ENCODE measurements at regions of chr6 and their contacts with region 1.

Region 1: DNA sequence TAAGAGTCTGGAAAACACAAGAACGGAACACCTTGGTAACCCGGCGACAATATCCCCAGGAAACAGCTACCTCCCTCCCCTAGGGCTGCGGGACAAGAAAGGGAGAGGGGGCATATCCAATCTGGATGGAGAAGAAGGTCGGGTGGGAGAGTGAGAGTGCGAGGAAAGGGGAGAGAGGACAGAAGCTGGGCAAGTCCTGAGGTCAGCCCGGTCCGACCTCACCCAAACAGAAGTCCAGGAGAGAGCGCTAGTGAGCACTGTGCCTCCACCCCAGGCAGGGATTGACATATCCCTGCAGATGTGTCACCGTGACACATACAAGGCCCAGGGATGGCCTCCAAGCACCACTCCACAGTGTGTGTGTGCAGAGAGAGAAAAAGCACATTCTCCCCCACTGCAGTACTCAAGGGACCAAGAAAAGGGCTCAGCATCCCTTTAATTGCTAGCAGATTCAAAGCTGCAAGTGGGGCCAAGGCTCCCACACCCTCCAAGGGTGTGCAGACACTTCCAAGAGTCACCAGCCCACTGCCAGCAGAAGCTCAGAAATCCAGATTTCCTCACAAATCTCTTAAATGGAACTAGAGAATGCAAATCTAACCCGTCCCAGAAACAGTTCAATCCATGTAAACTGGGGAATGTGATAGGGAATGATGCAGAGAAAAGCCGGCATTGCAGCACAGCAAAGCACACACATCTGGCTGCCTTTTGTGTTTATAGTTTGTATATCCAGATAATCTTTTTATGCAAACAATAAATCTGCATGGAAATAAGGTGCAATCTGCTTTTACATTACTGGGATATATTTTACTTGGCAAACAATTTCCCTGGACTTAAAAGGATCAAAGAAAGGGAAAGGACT is 3.1 kb downstream of the PXDC1 start:
- H3K4me3 ChIP-seq: no peak overlapping the region
- H3K27ac ChIP-seq: no peak overlapping the region
- H3K4me1 ChIP-seq: peaks cover 3% of the 10 kb centered on the region; the same call in 1 of the 2 replicates
- CTCF ChIP-seq: peak; percentile 76

Region 2: DNA sequence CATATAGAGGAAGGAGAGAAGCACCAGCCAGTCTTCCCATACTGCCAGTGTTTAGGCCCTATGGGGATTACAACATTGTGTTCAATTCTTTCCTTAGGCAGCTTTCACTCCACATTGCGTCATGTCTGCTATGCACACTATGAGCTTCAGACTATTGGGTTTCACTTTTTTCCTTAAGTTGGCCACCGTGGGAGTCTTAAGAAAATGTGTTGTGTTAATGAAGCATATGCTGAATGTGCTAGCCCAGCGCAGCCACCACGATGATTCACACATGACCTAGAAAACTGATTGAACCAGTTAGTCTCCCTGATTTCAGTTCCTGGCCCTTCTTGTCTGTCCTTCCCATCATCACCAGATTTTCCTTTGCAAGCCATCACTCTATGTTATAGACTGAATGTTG is 542.5 kb before region 1 on chr6:
- CTCF ChIA-PET with region 1: no interaction called
- POLR2A ChIA-PET with region 1: no interaction called
- H3K4me3 ChIP-seq: no peak overlapping the region
- H3K27ac ChIP-seq: no peak overlapping the region
- H3K4me1 ChIP-seq: 0 out of 2 replicates have a peak, but pooled peaks cover 3% of the 10 kb centered on the region
- CTCF ChIP-seq: no peak

Region 3: DNA sequence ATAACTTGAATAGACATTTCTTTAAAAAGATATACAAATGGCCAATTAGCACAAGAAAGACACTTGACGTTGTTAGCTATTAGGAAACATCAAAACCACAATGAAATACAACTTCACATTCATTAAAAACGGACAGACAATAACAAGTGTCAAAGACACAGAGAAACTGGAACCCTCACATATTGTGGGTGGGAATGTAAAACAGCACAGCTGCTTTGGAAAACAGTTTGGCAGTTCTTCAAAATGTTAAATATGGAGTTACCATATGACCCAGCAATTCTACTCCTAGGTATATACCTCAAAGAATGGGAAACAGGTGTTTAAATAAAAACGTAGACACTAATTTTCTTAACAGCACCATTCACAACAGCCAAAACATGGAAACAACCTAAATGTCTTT is 191.1 kb before region 1 on chr6:
- CTCF ChIA-PET with region 1: no interaction called
- POLR2A ChIA-PET with region 1: no interaction called
- H3K4me3 ChIP-seq: no peak overlapping the region
- H3K27ac ChIP-seq: no peak overlapping the region
- H3K4me1 ChIP-seq: peaks cover 8% of the 10 kb centered on the region; the same call in 1 of the 2 replicates
- CTCF ChIP-seq: no peak

Region 4: GRCh38 chr6:3887150-3887700 is 138.8 kb after region 1 on chr6:
- CTCF ChIA-PET with region 1: interaction called, 13 read pairs
- POLR2A ChIA-PET with region 1: interaction called, 3 read pairs
- H3K4me3 ChIP-seq: no peak overlapping the region
- H3K27ac ChIP-seq: no peak overlapping the region
- H3K4me1 ChIP-seq: no peaks in the 10 kb centered on the region
- CTCF ChIP-seq: no peak

Region 5: DNA sequence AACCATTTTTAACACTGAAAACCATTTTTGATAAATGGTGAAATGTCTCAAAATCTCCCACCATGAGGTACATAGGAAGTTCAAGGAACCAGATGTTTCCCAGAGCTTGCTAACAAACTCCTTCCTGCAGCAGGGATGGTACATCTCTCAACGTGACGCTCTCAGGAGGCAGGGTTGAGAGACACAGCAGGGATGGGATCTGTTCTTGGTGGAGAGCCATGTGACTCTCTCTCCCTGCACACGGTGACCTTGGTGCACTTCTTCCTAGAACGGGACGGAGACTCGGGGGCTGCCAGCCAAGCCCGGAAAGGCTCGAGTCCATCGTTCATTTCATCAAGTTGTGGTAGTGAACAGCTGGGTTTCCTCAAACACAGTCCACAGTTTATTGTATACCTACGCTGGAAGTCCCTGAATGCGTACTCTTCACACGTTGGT is 194.9 kb after region 1 on chr6:
- CTCF ChIA-PET with region 1: interaction called, 14 read pairs
- POLR2A ChIA-PET with region 1: no interaction called
- H3K4me3 ChIP-seq: no peak overlapping the region
- H3K27ac ChIP-seq: no peak overlapping the region
- H3K4me1 ChIP-seq: no peaks in the 10 kb centered on the region
- CTCF ChIP-seq: no peak

Region 6: GRCh38 chr6:4008324-4009047 is 260.0 kb after region 1 on chr6:
- CTCF ChIA-PET with region 1: interaction called, 25 read pairs
- POLR2A ChIA-PET with region 1: interaction called, 3 read pairs
- H3K4me3 ChIP-seq: no peak overlapping the region
- H3K27ac ChIP-seq: no peak overlapping the region
- H3K4me1 ChIP-seq: peaks cover 12% of the 10 kb centered on the region
- CTCF ChIP-seq: peak; percentile 32; the same call in 1 of the 2 replicates